Activated T-helper 1 cell treated with anti-CD3 and anti-CD28 coated beads, Interleukin-12 subunit alpha, Interleukin-12 subunit beta, Interleukin-2, Interleukin-4 antibody, amounts not matched to agents 30 ng/mL and 10 ng/mL and 1 ng/mL, durations not matched to agents 14 hours and 24 hours and 36 hours (primary cell): ENCODE measurements at regions of chr7 and their contacts with region 1.

Region 1: GRCh38 chr7:1137510-1138167 is 22.4 kb downstream of the ZFAND2A start:
- DNase-seq: no peak
- H3K4me3 Mint-ChIP-seq: peak overlapping the region; percentile 89
- H3K27ac Mint-ChIP-seq: peak overlapping the region; percentile 81
- H3K4me1 Mint-ChIP-seq: peaks cover 10% of the 10 kb centered on the region
- H3K27me3 Mint-ChIP-seq: no peaks in the 10 kb centered on the region

Region 2: GRCh38 chr7:876167-876967 is 261.3 kb before region 1 on chr7 and contains the start of gene GET4:
- intact Hi-C with region 1: loop called (anchors 5 kb)
- DNase-seq: peak; percentile 98
- H3K4me3 Mint-ChIP-seq: peak within 1 kb of the TSS; percentile 93
- H3K27ac Mint-ChIP-seq: peak within 1 kb of the TSS; percentile 92
- H3K4me1 Mint-ChIP-seq: peaks cover 16% of the 10 kb centered on the region
- H3K27me3 Mint-ChIP-seq: no peaks in the 10 kb centered on the region
- total RNA-seq, gene GET4: 38.7 and 43.8 TPM in 2 replicates

Region 3: DNA sequence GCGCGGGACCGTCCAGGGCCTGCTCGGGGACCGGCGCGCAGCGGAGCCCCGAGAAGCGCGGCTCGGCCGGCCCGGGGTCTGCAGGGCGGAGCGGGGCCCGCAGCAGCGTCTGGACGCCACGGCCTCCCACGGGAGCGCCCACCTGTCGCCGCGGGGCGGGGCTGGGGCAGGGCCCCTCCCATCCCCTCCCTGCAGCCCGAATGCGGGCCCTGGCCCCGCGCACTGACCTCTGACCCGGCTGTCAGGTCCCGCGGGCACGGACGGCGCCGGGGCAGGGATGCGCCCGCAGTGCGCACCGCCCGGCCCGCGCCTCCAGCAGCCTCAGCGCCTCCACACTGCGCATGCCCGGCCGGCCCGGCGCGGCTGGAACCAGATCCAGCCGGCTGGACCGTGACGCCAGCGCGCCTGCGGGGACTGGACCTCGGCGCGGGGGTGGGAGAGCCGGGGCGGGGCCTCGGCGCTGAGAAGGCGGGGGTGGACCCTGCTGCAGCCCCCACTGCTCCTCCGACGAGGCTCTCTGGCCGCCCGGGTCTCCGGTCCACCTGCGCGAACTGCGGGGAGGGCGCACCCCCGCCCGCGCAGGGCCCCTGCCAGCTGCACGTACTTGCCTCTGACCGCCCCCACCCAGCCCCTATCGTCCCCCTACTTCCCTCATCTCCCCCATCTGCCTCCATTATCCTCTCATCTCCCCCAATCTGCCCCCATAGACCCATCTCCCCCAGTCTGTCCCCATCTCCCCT is 109.4 kb before region 1 on chr7:
- intact Hi-C with region 1: loop called (anchors 1 kb)
- DNase-seq: peak; percentile 82
- H3K4me3 Mint-ChIP-seq: peak overlapping the region; percentile 82
- H3K27ac Mint-ChIP-seq: peak overlapping the region; percentile 91
- H3K4me1 Mint-ChIP-seq: peaks cover 17% of the 10 kb centered on the region
- H3K27me3 Mint-ChIP-seq: no peaks in the 10 kb centered on the region

Region 4: GRCh38 chr7:1103009-1103788 is 34.4 kb before region 1 on chr7:
- intact Hi-C with region 1: loop called (anchors 1 kb)
- DNase-seq: peak; percentile 4
- H3K4me3 Mint-ChIP-seq: peak overlapping the region; percentile 30
- H3K27ac Mint-ChIP-seq: peak overlapping the region; percentile 26
- H3K4me1 Mint-ChIP-seq: peaks cover 27% of the 10 kb centered on the region
- H3K27me3 Mint-ChIP-seq: no peaks in the 10 kb centered on the region

Region 5: DNA sequence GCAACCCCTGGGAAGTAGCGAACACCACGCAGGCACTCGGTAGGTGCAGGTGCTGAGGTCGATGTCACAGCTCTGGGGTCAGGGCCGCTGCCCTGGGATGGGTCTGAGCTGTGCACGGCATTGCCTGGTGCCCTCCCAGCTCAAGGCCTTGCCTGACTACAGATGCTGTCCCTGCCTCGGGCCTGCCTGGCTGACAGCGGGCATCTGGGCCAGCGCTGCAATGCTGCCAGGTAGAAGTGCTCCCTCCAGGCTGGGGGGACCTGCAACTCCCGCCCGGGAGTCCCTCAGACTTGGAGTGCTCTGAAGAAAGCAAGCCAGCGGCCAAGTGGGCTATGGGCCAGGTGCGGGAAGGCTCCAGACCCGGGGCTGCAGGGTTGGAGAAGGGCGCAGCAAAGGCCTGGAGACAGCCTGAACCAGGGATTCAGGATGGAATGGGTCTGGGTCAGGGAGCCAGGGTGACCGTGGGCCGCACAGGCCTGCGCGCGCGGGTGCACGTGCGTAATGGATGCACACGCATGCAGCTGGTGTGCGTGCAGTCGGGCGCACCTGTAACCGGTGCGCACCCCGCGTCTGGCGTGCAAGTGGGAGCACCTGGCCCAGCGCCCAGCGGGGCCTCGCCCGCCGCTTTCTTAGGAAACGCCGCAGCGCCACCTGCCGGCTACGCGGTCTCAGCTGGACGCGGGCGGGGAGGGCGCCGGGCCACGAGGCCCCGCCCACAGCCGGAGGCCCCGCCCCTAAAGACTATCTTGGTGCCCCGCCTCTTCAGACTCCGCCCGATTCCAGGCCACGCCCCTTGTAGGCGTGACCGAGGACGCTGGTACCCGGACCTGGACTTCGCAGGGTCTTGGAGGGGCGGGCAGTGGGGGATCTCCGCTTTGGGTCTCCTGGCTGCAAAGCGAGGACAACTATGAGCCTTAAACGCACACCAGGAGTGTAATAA is 275.0 kb after region 1 on chr7:
- intact Hi-C with region 1: loop called (anchors 1 kb)
- DNase-seq: peak; percentile 79
- H3K4me3 Mint-ChIP-seq: no peak overlapping the region
- H3K27ac Mint-ChIP-seq: no peak overlapping the region
- H3K4me1 Mint-ChIP-seq: peaks cover 12% of the 10 kb centered on the region
- H3K27me3 Mint-ChIP-seq: peaks cover 2% of the 10 kb centered on the region

Region 6: GRCh38 chr7:2632733-2633537 is 1495.3 kb after region 1 on chr7:
- intact Hi-C with region 1: loop called (anchors 5 kb)
- DNase-seq: peak; percentile 24
- H3K4me3 Mint-ChIP-seq: peak overlapping the region; percentile 91
- H3K27ac Mint-ChIP-seq: peak overlapping the region; percentile 81
- H3K4me1 Mint-ChIP-seq: peaks cover 15% of the 10 kb centered on the region
- H3K27me3 Mint-ChIP-seq: no peaks in the 10 kb centered on the region